ENCODE measurements at regions of chr4 and their contacts with region 1.

Region 1: DNA sequence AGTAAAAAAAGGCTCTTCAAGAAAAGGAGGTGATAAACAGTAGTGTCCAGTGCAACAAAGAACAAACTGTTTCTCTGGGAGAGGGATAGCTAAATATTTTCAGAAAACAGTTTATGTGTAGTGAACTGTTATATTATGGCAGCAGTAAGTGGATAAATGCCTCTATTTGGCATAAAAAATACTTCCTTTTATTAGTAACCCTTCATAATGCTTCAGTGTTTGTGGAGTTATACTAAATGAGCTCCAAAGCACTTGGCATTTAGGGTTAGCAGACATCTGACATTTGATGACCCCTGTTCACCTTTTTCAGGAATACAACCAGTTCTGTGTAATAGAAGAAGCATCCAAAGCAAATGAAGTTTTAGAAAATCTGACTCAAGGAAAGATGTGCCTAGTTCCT is 31.9 kb downstream of the TRAPPC11 start:
- DNase-seq: no peak
- H3K4me3 ChIP-seq: no peak overlapping the region
- H3K27me3 ChIP-seq: no peaks in the 10 kb centered on the region
- CTCF ChIP-seq: no peak

Region 2: DNA sequence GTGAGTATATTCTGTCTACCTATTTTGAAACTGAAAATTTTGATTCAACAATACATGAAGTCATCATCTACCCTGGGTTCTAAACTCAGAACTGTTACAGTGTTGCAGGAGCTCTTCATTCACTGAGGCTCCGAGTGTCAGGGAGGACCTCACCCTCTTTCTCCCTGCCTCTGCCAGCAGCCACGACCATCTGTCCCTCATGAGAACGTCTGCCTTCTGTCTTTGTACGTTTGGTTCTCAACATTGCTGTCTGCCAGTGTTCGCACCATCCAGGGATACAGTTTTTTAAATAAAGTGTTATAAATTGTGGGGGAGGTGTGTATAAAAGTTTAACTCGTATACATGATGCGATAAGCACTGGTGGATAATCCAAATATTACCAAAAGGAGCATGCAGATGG is 23.6 kb after region 1 on chr4:
- CTCF ChIA-PET with region 1: interaction called, 3 read pairs
- POLR2A ChIA-PET with region 1: interaction called, 12 read pairs
- DNase-seq: no peak
- H3K4me3 ChIP-seq: no peak overlapping the region
- H3K27me3 ChIP-seq: no peaks in the 10 kb centered on the region
- CTCF ChIP-seq: no peak